IMR-90 (cell line): ENCODE measurements at regions of chr15 and their contacts with region 1.

Region 1: DNA sequence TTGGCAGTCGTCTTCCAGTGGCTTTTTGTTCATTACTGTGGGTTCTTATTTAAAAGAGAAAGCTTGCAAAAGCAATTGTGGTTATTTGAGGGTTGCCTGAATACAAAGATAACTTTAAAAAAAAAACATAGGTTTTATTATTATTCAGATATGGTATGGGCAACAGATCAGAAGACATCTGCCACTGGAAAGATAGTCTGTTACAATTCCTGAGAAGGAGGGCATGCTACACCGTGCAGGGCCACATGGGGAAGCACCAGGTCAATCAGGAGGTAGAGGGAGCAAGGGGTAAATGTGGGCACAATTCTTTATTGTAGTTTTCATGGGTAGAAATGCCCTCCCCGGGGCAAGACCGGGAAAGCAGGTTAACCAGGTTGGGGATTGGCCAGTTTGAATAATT is 46.5 kb downstream of the BBS4 start:
- DNase-seq: no peak
- ATAC-seq: no peak
- H3K4me3 ChIP-seq: no peak overlapping the region
- H3K27ac ChIP-seq: no peak overlapping the region
- H3K4me1 ChIP-seq: peaks cover 4% of the 10 kb centered on the region
- H3K27me3 ChIP-seq: no peaks in the 10 kb centered on the region
- CTCF ChIP-seq: no peak
- POLR2A ChIP-seq: no peak
- RAD21 ChIP-seq: no peak

Region 2: DNA sequence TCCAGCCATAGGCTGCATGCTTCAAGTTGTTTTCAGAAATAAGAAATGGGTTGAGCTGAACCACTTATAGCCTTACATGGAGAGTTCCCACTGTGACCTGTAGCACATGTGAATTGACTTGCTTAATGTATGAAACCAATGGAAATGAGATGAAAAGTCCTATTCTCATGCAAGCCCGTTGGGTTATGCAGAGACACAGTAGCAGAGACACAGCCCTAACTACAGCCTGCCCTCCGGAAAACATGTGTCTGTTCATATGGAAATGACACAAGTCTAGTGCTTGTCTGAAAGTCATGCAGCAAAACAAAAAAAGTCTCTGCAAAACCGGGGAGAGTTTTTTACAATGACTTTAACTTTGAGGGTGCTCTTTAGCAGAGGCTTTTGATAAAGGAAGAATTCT is 61.0 kb before region 1 on chr15:
- CTCF ChIA-PET with region 1: no interaction called
- POLR2A ChIA-PET with region 1: no interaction called
- dilution Hi-C with region 1: no loop called
- in situ Hi-C with region 1: no loop called
- intact Hi-C with region 1: no loop called
- DNase-seq: no peak
- ATAC-seq: no peak
- H3K4me3 ChIP-seq: no peak overlapping the region
- H3K27ac ChIP-seq: no peak overlapping the region
- H3K4me1 ChIP-seq: peaks cover 1% of the 10 kb centered on the region; the same call in 1 of the 2 replicates
- H3K27me3 ChIP-seq: peaks cover 10% of the 10 kb centered on the region
- CTCF ChIP-seq: no peak
- POLR2A ChIP-seq: no peak
- RAD21 ChIP-seq: no peak

Region 3: DNA sequence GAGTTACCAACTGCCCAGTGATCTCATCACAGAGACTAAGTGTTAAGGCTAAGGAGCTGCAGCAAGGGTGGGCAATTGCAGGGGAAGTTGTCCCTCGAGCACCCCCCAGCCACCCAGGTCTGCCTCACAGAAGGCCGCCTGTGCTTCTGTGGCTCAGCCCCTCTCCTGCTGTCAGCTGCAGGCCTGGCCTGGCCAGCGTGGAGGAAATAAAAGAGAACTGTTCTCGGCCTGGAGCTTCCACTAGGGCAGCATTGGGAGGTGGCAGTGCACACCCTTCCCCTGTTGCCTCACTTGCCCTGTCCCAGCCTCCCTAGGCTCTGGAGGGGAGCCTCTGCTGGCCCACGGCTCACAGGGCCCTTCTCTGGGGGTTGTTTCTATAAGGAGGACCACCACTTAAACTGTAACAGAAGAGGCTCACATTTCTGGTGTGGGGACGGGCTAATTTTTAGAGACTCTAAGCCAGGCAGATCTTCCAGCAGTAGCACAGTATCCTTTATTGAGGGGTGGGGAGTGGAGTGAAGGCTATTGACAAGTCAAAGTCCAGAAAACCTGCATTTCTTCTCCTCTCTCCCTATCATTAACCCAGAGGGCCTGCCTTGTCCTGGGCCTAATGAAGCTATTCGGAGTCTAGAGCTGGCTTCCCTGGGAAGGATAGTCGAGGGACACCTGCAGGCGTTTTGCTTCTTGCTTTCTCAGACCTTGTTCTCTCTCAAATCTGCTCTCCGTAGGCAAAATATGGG is 126.7 kb after region 1 on chr15:
- CTCF ChIA-PET with region 1: no interaction called
- POLR2A ChIA-PET with region 1: no interaction called
- dilution Hi-C with region 1: no loop called
- in situ Hi-C with region 1: no loop called
- intact Hi-C with region 1: no loop called
- DNase-seq: no peak
- ATAC-seq: no peak
- H3K4me3 ChIP-seq: no peak overlapping the region
- H3K27ac ChIP-seq: no peak overlapping the region
- H3K4me1 ChIP-seq: no peaks in the 10 kb centered on the region
- H3K27me3 ChIP-seq: peaks cover 12% of the 10 kb centered on the region
- CTCF ChIP-seq: no peak
- POLR2A ChIP-seq: no peak
- RAD21 ChIP-seq: no peak

Region 4: DNA sequence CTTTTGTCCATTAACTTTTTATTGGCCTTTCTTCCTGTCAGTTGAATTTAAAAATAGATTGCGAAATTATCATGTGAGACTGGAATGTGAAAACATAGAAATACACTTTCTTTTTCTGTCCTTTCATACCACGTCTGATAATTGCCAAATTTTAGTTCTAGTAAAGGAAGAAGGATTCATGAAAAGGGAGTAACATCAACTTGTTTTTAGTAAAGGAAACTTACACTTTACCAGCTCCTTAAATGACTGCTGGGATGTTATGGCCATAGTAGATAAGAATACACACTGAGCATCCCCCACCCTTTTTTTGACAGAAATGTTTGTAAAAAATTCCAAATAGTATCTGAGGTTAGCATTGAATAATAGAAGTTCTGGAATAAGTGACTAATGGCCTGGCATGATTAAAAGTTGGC is 457.7 kb after region 1 on chr15:
- CTCF ChIA-PET with region 1: no interaction called
- POLR2A ChIA-PET with region 1: no interaction called
- dilution Hi-C with region 1: no loop called
- in situ Hi-C with region 1: no loop called
- intact Hi-C with region 1: loop called (anchors 2 kb)
- DNase-seq: peak; percentile 18
- ATAC-seq: no peak; the same call in 1 of the 2 replicates
- H3K4me3 ChIP-seq: no peak overlapping the region
- H3K27ac ChIP-seq: no peak overlapping the region; the same call in 1 of the 2 replicates
- H3K4me1 ChIP-seq: no peaks in the 10 kb centered on the region
- H3K27me3 ChIP-seq: no peaks in the 10 kb centered on the region
- CTCF ChIP-seq: no peak
- POLR2A ChIP-seq: no peak
- RAD21 ChIP-seq: no peak